Activated B cell treated with CpG ODN at 0.5 μM for 24 hours (primary cell): ENCODE measurements at regions of chr6 and their contacts with region 1.

Region 1: GRCh38 chr6:89145787-89146646 is at the start of gene PM20D2:
- DNase-seq: peak; percentile 72
- ATAC-seq: peak; percentile 78
- H3K4me3 Mint-ChIP-seq: peak within 1 kb of the TSS; percentile 90
- H3K27ac Mint-ChIP-seq: peak within 1 kb of the TSS; percentile 92
- H3K4me1 Mint-ChIP-seq: peaks cover 22% of the 10 kb centered on the region
- H3K27me3 Mint-ChIP-seq: no peaks in the 10 kb centered on the region
- CTCF ChIP-seq: no peak
- total RNA-seq, gene PM20D2: 10.9 and 11.6 TPM in 2 replicates

Region 2: GRCh38 chr6:89117211-89118108 is 28.6 kb before region 1 on chr6 and contains the start of gene SRSF12:
- CTCF ChIA-PET with region 1: no interaction called
- POLR2A ChIA-PET with region 1: no interaction called
- intact Hi-C with region 1: loop called (anchors 2 kb)
- DNase-seq: peak; percentile 43
- ATAC-seq: peak; percentile 81
- H3K4me3 Mint-ChIP-seq: peak within 1 kb of the TSS; percentile 80
- H3K27ac Mint-ChIP-seq: no peak within 1 kb of the TSS
- H3K4me1 Mint-ChIP-seq: peaks cover 6% of the 10 kb centered on the region
- H3K27me3 Mint-ChIP-seq: peaks cover 14% of the 10 kb centered on the region
- CTCF ChIP-seq: no peak
- total RNA-seq, gene SRSF12: not detected in 2 replicates